ENCODE measurements at regions of chr18 and their contacts with region 1.

Region 1: GRCh38 chr18:30465096-30465495 is 577.4 kb downstream of the DSC3 start:
- DNase-seq: no peak
- H3K4me3 Mint-ChIP-seq: no peak overlapping the region
- H3K27ac Mint-ChIP-seq: no peak overlapping the region
- H3K4me1 Mint-ChIP-seq: no peaks in the 10 kb centered on the region
- H3K27me3 Mint-ChIP-seq: no peaks in the 10 kb centered on the region

Region 2: GRCh38 chr18:30527226-30527625 is 62.1 kb after region 1 on chr18:
- intact Hi-C with region 1: loop called (anchors 10 kb)
- DNase-seq: no peak
- H3K4me3 Mint-ChIP-seq: no peak overlapping the region
- H3K27ac Mint-ChIP-seq: no peak overlapping the region
- H3K4me1 Mint-ChIP-seq: no peaks in the 10 kb centered on the region
- H3K27me3 Mint-ChIP-seq: no peaks in the 10 kb centered on the region

Region 3: GRCh38 chr18:30556112-30556511 is 91.0 kb after region 1 on chr18:
- intact Hi-C with region 1: no loop called
- DNase-seq: no peak
- H3K4me3 Mint-ChIP-seq: no peak overlapping the region
- H3K27ac Mint-ChIP-seq: no peak overlapping the region
- H3K4me1 Mint-ChIP-seq: no peaks in the 10 kb centered on the region
- H3K27me3 Mint-ChIP-seq: no peaks in the 10 kb centered on the region